SK-N-SH (cell line): ENCODE measurements at regions of chr15 and their contacts with region 1.

Region 1: DNA sequence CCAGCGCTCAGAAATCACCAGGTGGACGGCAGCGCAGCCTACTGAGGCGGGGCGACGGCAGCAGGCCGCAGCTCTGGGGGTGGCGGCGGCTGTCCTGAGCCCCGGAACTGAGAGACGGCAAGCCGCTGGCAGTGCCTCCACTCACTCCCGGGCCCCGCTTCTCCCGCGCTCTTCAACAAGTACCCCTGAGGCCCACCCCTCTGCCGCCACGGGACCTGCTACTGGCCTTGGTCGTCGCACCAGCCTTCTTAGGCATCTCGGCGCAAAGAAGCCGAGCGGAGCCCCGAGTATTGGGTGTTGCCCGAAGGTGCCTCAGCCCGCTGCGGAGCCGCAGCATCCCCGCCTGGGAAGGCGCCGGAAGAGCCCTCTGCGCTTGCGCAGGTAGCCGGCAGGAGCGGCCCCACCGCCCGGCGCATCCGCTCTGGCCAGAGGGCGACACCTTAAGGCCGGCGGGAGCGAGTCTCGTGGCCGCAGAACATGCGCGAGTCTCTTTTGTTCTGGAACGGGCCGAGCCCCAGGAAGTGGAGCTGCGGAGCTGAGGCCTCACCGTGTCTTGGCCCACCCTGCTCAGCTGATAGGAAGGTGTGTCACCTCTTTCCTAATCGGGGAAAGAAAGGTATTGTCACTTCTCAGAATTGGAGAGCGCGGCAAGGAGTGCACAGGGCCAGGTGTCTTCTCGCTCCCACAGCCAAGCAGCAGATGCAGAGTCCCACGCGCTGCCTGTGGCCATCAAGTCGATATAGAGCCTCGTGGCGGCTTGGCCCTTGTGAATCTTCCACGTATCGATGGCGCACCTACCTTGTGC is at the start of gene C15orf40:
- DNase-seq: peak; percentile 96
- H3K4me3 ChIP-seq: peak within 1 kb of the TSS; percentile 94 to 99
- H3K27ac ChIP-seq: peak within 1 kb of the TSS; percentile 75 to 85
- H3K4me1 ChIP-seq: peaks cover 12 to 27% of the 10 kb centered on the region in 2 experiments; a peak in 3 of 4 replicates
- H3K27me3 ChIP-seq: no peaks in the 10 kb centered on the region
- CTCF ChIP-seq: peak; percentile 69
- EP300 ChIP-seq: 0 out of 4 replicates have a peak, but pooled peaks of 1 of the 2 experiments have one; percentile 18
- RAD21 ChIP-seq: 0 out of 2 replicates have a peak, but pooled peaks have one; percentile 18
- polyA plus RNA-seq, gene C15orf40: 44.1 and 46.6 TPM in 2 replicates

Region 2: DNA sequence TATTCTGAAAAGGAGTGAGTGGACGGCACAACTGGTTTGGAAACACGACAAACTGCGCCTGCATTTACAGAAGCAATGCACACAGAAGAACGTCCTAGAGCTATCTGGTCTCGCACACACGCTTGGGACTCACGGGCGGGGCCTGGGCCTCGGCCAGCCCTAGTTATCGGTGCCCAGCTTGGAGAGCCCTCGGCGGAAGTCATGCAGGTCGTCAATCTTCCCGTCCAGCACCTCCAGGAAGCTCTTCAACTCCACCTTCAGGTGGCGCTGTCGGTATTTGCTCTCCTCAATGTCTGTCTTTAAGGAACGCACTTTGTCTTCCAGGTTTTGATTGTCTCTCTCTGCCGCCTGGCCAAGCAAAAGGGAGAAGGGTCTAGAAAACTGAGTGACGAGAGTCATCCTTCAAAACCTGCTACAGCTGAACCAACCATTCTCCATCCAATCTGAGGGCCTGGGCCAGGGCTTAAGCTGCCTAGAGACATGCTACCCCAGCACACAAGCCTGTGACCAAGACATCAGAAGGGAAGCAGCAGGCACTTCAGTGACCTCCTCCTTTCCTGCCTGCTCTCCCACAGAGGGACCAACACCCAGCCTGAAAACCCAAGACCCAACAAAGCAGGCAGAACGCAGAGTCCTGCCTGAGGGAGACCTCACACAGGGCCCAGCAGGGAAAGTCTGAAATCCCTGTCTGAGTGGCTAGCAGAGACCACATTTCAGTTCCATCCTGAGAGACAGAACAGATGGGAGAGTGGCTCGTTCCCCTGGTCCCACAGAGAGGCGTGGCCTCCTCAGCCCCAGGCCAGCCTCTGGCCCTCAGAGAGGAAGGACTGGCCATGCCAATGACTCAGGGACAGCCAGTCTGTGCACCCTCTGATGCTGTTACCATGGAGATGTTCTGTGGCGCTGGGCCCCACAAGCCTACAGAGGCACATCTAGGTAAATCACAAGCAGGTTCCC is 161.6 kb before region 1 on chr15:
- CTCF ChIA-PET with region 1: interaction called, 30 read pairs
- POLR2A ChIA-PET with region 1: no interaction called
- DNase-seq: peak; percentile 89
- H3K4me3 ChIP-seq: no peak overlapping the region; a peak in 1 of 4 replicates
- H3K27ac ChIP-seq: peak overlapping the region in 1 of 2 experiments; percentile 90; a peak in 2 of 4 replicates
- H3K4me1 ChIP-seq: peaks cover 4 to 22% of the 10 kb centered on the region in 2 experiments; a peak in 3 of 4 replicates
- H3K27me3 ChIP-seq: no peaks in the 10 kb centered on the region
- CTCF ChIP-seq: peak; percentile 53
- EP300 ChIP-seq: no peak; a peak in 1 of 4 replicates
- RAD21 ChIP-seq: peak; percentile 72

Region 3: DNA sequence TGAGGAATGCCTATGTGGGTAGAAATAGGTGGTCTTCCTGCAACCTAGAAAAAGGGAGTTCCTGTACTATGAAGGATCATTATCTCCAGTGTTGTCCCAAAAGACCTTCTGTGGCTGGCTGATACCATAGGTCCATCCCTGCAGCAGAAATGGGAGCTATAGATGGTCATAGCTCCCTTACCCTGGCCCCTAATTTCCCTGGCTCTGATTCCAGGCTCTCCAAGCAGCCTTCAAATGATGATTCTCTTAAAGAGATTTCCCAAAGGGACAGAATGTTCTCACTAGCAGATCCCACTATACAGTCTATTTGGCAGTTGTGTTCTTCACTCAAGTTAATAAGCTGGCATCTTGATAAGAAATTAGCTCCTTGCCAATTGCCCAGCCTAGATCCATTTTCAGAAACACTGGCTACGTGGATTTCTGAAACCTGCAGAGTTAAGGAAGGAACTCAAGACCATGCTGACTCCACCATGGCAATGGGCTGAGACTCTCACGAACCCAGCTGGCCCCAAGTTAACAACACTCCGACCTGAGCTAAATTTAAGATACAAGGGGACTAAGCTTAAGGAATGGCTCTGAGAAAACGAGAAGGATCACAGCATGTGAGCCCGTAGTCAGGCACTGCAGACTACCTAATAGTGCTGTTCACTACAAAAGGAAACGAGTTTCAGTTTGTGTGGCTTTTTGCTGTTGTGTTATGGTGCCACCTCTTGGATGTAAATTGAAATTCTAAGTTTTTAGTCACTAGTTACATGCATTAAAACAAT is 11.4 kb before region 1 on chr15:
- CTCF ChIA-PET with region 1: interaction called, 36 read pairs
- POLR2A ChIA-PET with region 1: interaction called, 3 read pairs
- DNase-seq: peak; percentile 68
- H3K4me3 ChIP-seq: peak overlapping the region; percentile 27 to 33
- H3K27ac ChIP-seq: no peak overlapping the region
- H3K4me1 ChIP-seq: peaks cover 0 to 7% of the 10 kb centered on the region in 2 experiments; a peak in 1 of 4 replicates
- H3K27me3 ChIP-seq: no peaks in the 10 kb centered on the region
- CTCF ChIP-seq: peak; percentile 70
- EP300 ChIP-seq: no peak
- RAD21 ChIP-seq: peak; percentile 91

Region 4: GRCh38 chr15:83066734-83067637 is 55.5 kb after region 1 on chr15 and contains the start of gene BTBD1:
- CTCF ChIA-PET with region 1: interaction called, 10 read pairs
- POLR2A ChIA-PET with region 1: no interaction called
- DNase-seq: peak; percentile 96
- H3K4me3 ChIP-seq: peak within 1 kb of the TSS; percentile 86 to 94
- H3K27ac ChIP-seq: peak within 1 kb of the TSS; percentile 91 to 94
- H3K4me1 ChIP-seq: peaks cover 24 to 26% of the 10 kb centered on the region in 2 experiments; a peak in 3 of 4 replicates
- H3K27me3 ChIP-seq: no peaks in the 10 kb centered on the region
- CTCF ChIP-seq: peak; percentile 6; the same call in 1 of the 2 replicates
- EP300 ChIP-seq: no peak
- RAD21 ChIP-seq: no peak
- polyA plus RNA-seq, gene BTBD1: 34.4 and 42.5 TPM in 2 replicates